GM12878 (cell line): ENCODE measurements at regions of chr12 and their contacts with region 1.

Region 1: DNA sequence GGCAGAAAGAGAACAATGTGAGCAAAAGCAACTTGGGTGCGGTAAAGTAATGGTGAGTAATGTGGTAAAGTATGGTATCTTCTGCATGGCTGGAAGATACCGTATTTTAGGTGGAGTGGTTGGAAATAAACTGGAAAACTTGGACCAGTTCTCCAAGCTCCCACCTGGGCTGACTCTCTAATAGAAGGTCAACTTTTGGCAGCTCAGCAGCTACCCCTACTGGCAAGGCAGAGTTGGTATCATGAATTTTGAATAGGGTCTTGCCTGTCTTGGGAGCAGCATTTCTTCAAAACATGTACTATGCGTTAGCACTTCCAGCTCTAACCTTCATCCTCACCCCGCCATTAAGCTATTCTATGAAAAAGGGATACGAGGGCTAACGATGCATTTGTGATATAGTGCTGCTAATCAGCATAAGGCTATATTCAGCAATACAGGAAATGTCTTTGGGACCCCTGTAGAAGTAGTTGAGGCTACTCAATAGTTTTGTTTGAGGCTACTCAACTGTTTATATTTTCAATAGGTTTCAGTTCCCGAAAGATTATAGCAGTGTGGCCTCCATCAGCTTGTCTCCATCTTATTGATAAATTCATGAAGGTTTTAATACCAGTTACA is 276.3 kb upstream of the FAR2 start:
- DNase-seq: no peak
- ATAC-seq: peak; percentile 76
- H3K4me3 ChIP-seq: no peak overlapping the region
- H3K27ac ChIP-seq: no peak overlapping the region
- H3K4me1 ChIP-seq: no peaks in the 10 kb centered on the region
- H3K27me3 ChIP-seq: no peaks in the 10 kb centered on the region
- CTCF ChIP-seq: peak; percentile 72 to 79 (median 74)
- EP300 ChIP-seq: no peak
- POLR2A ChIP-seq: no peak
- RAD21 ChIP-seq: peak; percentile 84

Region 2: GRCh38 chr12:27751386-27752047 is 1121.2 kb before region 1 on chr12:
- CTCF ChIA-PET with region 1: no interaction called
- POLR2A ChIA-PET with region 1: no interaction called
- RAD21 ChIA-PET with region 1: no interaction called
- SMC1A ChIA-PET with region 1: no interaction called
- in situ Hi-C with region 1: no loop called
- intact Hi-C with region 1: loop called (anchors 10 kb)
- DNase-seq: no peak
- ATAC-seq: no peak
- H3K4me3 ChIP-seq: no peak overlapping the region
- H3K27ac ChIP-seq: no peak overlapping the region
- H3K4me1 ChIP-seq: no peaks in the 10 kb centered on the region
- H3K27me3 ChIP-seq: no peaks in the 10 kb centered on the region
- CTCF ChIP-seq: no peak
- EP300 ChIP-seq: no peak
- POLR2A ChIP-seq: no peak
- RAD21 ChIP-seq: no peak

Region 3: DNA sequence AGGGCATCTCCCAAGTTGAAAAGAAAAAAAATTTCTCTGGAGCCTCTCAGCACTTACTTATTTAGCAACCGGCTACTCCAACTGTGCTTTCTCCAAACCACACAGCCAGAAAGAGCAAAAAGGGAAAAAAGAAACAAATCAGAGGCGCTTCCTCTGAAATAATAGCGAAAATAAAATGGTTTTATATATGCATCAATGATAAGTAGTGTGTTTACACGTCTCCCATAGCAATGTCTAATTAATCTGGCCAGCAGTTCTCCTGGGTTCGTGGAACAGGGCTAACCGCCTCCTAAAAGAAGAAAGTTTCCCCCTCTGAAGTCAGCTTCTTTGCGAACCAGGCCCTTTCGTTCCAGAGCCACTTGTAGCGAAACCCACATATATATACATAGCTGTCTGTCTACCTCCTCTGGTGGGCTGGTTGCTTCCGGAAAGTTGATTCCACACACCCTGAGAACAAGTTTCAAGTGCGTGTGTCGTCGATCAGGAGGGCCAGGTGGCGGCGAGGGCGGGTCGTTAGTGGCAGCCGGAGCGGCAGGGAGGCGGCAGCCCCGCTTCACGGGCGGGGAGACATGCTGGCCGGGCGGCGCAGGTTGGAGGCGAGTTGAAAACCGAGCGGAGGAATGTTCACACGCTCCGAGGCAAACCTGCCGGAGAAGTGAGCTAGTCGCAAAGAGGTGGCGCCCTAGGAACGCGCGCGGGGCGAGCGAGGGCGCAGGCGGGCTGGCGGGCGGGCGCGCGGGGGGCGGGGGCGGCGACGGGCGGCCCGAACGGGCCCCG is 902.9 kb before region 1 on chr12:
- CTCF ChIA-PET with region 1: interaction called, 6 read pairs
- POLR2A ChIA-PET with region 1: no interaction called
- RAD21 ChIA-PET with region 1: no interaction called
- SMC1A ChIA-PET with region 1: no interaction called
- in situ Hi-C with region 1: no loop called
- intact Hi-C with region 1: loop called (anchors 5 kb)
- DNase-seq: peak; percentile 25
- ATAC-seq: peak; percentile 81
- H3K4me3 ChIP-seq: peak overlapping the region; percentile 52
- H3K27ac ChIP-seq: no peak overlapping the region
- H3K4me1 ChIP-seq: peaks cover 10% of the 10 kb centered on the region
- H3K27me3 ChIP-seq: peaks cover 11 to 36% of the 10 kb centered on the region in 2 experiments
- CTCF ChIP-seq: peak in 2 of 3 experiments; percentile 6 to 38; a peak in 3 of 6 replicates
- EP300 ChIP-seq: no peak
- POLR2A ChIP-seq: no peak
- RAD21 ChIP-seq: peak; percentile 33

Region 4: DNA sequence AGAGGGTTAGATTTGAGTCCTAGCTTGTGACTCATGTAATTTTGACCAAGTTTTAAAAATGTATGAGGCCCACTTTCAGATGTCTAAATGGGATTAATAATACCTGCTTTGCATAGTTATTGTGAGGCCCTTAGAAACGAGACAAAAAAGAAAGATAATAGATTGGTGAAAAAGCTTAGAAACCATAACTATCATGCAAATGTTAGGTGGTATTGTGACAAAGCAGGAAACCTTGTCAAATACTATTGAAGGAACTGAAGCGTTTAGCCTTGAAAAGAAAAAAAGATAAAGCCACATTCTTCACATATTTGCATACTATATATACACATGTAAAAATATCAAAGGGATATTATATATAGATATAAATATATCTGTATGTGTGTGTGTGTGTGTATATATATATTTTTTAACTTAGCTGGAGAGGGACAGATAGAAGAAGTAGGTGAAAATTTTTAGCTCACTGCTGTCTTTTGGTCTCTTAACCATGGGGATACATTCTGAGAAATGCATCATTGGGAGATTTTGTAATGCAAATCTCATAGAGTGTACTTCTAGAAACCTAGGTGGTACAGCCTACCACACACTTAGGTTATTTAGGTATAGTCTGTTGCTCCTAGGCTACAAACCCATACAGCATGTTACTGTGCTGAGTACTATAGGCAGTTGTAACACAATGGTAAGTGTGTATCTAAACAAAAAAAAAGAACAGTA is 412.2 kb before region 1 on chr12:
- CTCF ChIA-PET with region 1: interaction called, 10 read pairs
- POLR2A ChIA-PET with region 1: no interaction called
- RAD21 ChIA-PET with region 1: no interaction called
- SMC1A ChIA-PET with region 1: no interaction called
- in situ Hi-C with region 1: no loop called
- intact Hi-C with region 1: no loop called
- DNase-seq: peak; percentile 21
- ATAC-seq: peak; percentile 90
- H3K4me3 ChIP-seq: no peak overlapping the region
- H3K27ac ChIP-seq: no peak overlapping the region
- H3K4me1 ChIP-seq: no peaks in the 10 kb centered on the region
- H3K27me3 ChIP-seq: no peaks in the 10 kb centered on the region
- CTCF ChIP-seq: no peak
- EP300 ChIP-seq: peak; percentile 18 to 49; a peak in 1 of 4 replicates
- POLR2A ChIP-seq: no peak
- RAD21 ChIP-seq: no peak

Region 5: GRCh38 chr12:28776913-28777422 is 95.8 kb before region 1 on chr12:
- CTCF ChIA-PET with region 1: no interaction called
- POLR2A ChIA-PET with region 1: no interaction called
- RAD21 ChIA-PET with region 1: no interaction called
- SMC1A ChIA-PET with region 1: no interaction called
- in situ Hi-C with region 1: no loop called
- intact Hi-C with region 1: no loop called
- DNase-seq: no peak
- ATAC-seq: no peak
- H3K4me3 ChIP-seq: no peak overlapping the region
- H3K27ac ChIP-seq: no peak overlapping the region
- H3K4me1 ChIP-seq: no peaks in the 10 kb centered on the region
- H3K27me3 ChIP-seq: no peaks in the 10 kb centered on the region
- CTCF ChIP-seq: no peak
- EP300 ChIP-seq: no peak
- POLR2A ChIP-seq: no peak
- RAD21 ChIP-seq: no peak

Region 6: GRCh38 chr12:28857369-28857768 is 15.4 kb before region 1 on chr12:
- CTCF ChIA-PET with region 1: no interaction called
- POLR2A ChIA-PET with region 1: no interaction called
- RAD21 ChIA-PET with region 1: no interaction called
- SMC1A ChIA-PET with region 1: no interaction called
- in situ Hi-C with region 1: no loop called
- intact Hi-C with region 1: no loop called
- DNase-seq: no peak
- ATAC-seq: no peak
- H3K4me3 ChIP-seq: no peak overlapping the region
- H3K27ac ChIP-seq: no peak overlapping the region
- H3K4me1 ChIP-seq: no peaks in the 10 kb centered on the region
- H3K27me3 ChIP-seq: no peaks in the 10 kb centered on the region
- CTCF ChIP-seq: no peak
- EP300 ChIP-seq: no peak
- POLR2A ChIP-seq: no peak
- RAD21 ChIP-seq: no peak